ENCODE measurements at regions of chrX and their contacts with region 1.

Region 1: GRCh38 chrX:47193475-47194193 is at the start of gene UBA1:
- DNase-seq: peak; percentile 92
- H3K4me3 ChIP-seq: peak within 1 kb of the TSS; percentile 63 to 66
- H3K27ac ChIP-seq: peak within 1 kb of the TSS; percentile 96 to 98
- H3K4me1 ChIP-seq: no peaks in the 10 kb centered on the region
- H3K27me3 ChIP-seq: no peaks in the 10 kb centered on the region
- CTCF ChIP-seq: peak; percentile 48 to 92 (median 88)
- POLR2A ChIP-seq: peak; percentile 76
- total RNA-seq, gene UBA1: 185 to 286 TPM

Region 2: DNA sequence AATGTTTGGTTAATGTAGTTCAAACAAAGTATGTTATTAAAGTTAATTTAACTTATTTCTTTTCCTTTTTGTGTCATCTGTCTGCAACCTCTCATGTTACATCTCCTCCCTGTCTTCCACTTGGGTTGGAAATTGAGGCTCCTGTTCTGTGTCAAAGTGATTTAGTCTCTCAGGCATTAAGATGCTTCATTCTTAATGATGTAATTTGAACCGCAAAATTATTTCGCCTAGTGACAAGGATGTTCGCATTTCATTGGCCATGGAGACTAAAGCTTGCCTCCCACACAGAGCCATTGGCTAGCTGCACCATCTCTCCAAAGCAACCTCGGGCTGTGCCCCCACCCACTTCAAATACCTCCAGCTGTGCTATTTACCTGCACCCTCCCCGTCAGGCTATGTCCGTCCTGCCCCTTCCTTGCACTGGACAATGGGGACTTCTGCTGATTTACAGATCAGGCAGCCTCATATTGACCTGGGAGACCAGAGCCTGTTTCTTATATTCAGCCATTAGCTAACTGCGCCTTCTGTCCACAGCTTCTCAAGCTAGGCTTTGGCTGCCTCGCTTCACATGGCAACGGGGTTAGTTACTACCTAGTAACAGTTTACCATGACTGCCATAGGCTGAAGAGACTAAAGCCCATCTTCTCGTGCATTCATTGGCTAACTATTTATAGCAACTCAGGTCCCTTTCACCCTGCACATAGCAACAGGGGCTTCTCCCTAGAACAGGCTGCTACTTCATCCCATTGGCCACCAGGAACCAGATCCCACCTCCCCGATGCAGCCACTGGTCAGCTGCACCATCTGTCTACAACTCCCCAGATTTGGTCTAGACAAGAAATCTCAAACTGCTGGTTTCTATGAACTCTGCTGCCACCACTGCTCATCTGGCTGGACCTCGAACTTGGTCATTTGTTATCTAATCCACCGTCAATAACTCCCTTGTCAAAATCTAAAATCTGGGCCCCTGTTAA is 168.2 kb after region 1 on chrX:
- intact Hi-C with region 1: loop called (anchors 5 kb)
- DNase-seq: peak; percentile 20
- H3K4me3 ChIP-seq: no peak overlapping the region
- H3K27ac ChIP-seq: peak overlapping the region; percentile 47 to 57
- H3K4me1 ChIP-seq: no peaks in the 10 kb centered on the region
- H3K27me3 ChIP-seq: no peaks in the 10 kb centered on the region
- CTCF ChIP-seq: peak in 1 of 4 experiments; percentile 9
- POLR2A ChIP-seq: no peak

Region 3: GRCh38 chrX:47384502-47384901 is 190.9 kb after region 1 on chrX:
- intact Hi-C with region 1: loop called (anchors 5 kb)
- DNase-seq: peak; percentile 64
- H3K4me3 ChIP-seq: no peak overlapping the region
- H3K27ac ChIP-seq: no peak overlapping the region
- H3K4me1 ChIP-seq: no peaks in the 10 kb centered on the region
- H3K27me3 ChIP-seq: no peaks in the 10 kb centered on the region
- CTCF ChIP-seq: peak; percentile 30 to 65 (median 60)
- POLR2A ChIP-seq: no peak

Region 4: DNA sequence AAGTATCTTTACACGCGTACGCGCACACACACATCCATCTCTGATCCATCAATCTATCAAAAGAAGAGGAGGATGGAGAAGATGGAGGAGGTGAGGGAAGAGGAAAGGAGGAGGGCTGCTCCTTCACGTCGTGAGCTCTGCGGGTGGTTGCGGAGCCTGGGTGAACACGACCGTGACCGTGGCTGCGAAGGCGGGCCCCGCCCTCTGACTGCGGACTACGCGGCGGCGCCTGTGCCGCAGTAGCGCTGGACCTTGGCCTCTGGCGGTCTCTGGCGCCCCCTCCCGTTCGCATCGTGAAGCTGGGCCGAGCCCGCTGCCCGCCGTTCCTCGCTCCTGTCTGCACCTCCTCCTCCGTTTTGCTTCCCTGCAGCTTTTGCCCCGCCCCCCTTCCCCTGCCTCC is 329.7 kb after region 1 on chrX:
- intact Hi-C with region 1: loop called (anchors 2 kb)
- DNase-seq: peak; percentile 69
- H3K4me3 ChIP-seq: peak overlapping the region; percentile 39 to 42
- H3K27ac ChIP-seq: no peak overlapping the region
- H3K4me1 ChIP-seq: no peaks in the 10 kb centered on the region
- H3K27me3 ChIP-seq: no peaks in the 10 kb centered on the region
- CTCF ChIP-seq: peak; percentile 62 to 85 (median 80)
- POLR2A ChIP-seq: no peak

Measured in prostate gland (tissue), 2 donors.